Activated CD8-positive, alpha-beta memory T cell treated with anti-CD3 and anti-CD28 coated beads, Interleukin-2, amount 10 ng/mL, durations not matched to agents 7 days and 5 days (primary cell): ENCODE measurements at regions of chr19 and their contacts with region 1.

Region 1: GRCh38 chr19:37906869-37907734 is at the start of gene SIPA1L3:
- DNase-seq: peak; percentile 96
- ATAC-seq: peak; percentile 98
- H3K4me3 Mint-ChIP-seq: peak within 1 kb of the TSS; percentile 75
- H3K27ac Mint-ChIP-seq: peak within 1 kb of the TSS; percentile 82
- H3K4me1 Mint-ChIP-seq: peaks cover 15% of the 10 kb centered on the region
- H3K27me3 Mint-ChIP-seq: no peaks in the 10 kb centered on the region
- total RNA-seq, gene SIPA1L3: 16.6 to 21.6 TPM

Region 2: GRCh38 chr19:37813340-37813739 is 93.8 kb before region 1 on chr19:
- CTCF ChIA-PET with region 1: no interaction called
- DNase-seq: no peak
- ATAC-seq: no peak
- H3K4me3 Mint-ChIP-seq: no peak overlapping the region
- H3K27ac Mint-ChIP-seq: no peak overlapping the region
- H3K4me1 Mint-ChIP-seq: peaks cover 3% of the 10 kb centered on the region
- H3K27me3 Mint-ChIP-seq: no peaks in the 10 kb centered on the region

Region 3: GRCh38 chr19:38004521-38005223 is 97.6 kb after region 1 on chr19:
- CTCF ChIA-PET with region 1: interaction called, 11 read pairs
- DNase-seq: no peak
- ATAC-seq: no peak
- H3K4me3 Mint-ChIP-seq: no peak overlapping the region
- H3K27ac Mint-ChIP-seq: no peak overlapping the region
- H3K4me1 Mint-ChIP-seq: no peaks in the 10 kb centered on the region
- H3K27me3 Mint-ChIP-seq: no peaks in the 10 kb centered on the region

Region 4: GRCh38 chr19:38095411-38096308 is 188.6 kb after region 1 on chr19:
- CTCF ChIA-PET with region 1: interaction called, 19 read pairs
- DNase-seq: peak; percentile 71
- ATAC-seq: peak; percentile 57
- H3K4me3 Mint-ChIP-seq: no peak overlapping the region
- H3K27ac Mint-ChIP-seq: no peak overlapping the region
- H3K4me1 Mint-ChIP-seq: no peaks in the 10 kb centered on the region
- H3K27me3 Mint-ChIP-seq: no peaks in the 10 kb centered on the region

Region 5: GRCh38 chr19:38224014-38224862 is 317.1 kb after region 1 on chr19 and contains the start of gene DPF1:
- CTCF ChIA-PET with region 1: interaction called, 10 read pairs
- DNase-seq: peak; percentile 66
- ATAC-seq: peak; percentile 84
- H3K4me3 Mint-ChIP-seq: peak within 1 kb of the TSS; percentile 55
- H3K27ac Mint-ChIP-seq: no peak within 1 kb of the TSS
- H3K4me1 Mint-ChIP-seq: peaks cover 14% of the 10 kb centered on the region
- H3K27me3 Mint-ChIP-seq: peaks cover 62% of the 10 kb centered on the region
- total RNA-seq, gene DPF1: 0.47 TPM in 1 of 2 experiments, not detected in the other

Region 6: DNA sequence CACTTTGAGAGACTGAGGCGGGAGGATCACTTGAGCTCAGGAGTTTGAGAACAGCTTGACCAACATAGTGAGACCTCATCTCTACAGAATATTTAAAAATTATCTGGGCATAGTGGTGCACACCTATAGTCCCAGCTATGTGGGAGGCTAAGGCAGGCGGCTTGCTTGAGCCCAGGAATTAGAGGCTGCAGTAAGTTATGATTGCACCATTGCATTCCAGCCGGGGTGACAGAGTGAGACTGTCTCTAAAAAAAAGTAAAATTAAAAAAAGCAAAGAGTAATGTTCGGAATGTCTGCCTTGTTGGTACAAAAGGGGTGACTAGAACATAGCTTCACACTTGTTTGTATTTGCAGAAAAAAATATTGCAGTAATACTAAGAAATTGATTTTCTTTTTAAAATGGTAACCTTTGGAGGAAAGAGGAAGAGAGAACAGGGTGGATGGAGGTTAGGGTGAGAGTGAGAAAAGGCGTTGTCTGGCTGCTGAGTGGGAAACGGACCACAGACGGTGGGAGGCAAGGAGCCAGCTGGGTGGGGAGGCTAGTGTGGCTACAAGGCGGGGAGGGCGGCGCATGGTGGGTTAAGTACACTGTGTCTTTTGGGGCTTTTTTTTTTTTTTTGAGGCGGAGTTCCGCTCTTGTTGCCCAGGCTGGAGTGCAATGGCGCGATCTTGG is 338.9 kb after region 1 on chr19:
- CTCF ChIA-PET with region 1: interaction called, 14 read pairs
- DNase-seq: no peak
- ATAC-seq: no peak
- H3K4me3 Mint-ChIP-seq: no peak overlapping the region
- H3K27ac Mint-ChIP-seq: no peak overlapping the region
- H3K4me1 Mint-ChIP-seq: peaks cover 4% of the 10 kb centered on the region
- H3K27me3 Mint-ChIP-seq: no peaks in the 10 kb centered on the region